Calu3 (cell line): ENCODE measurements at regions of chr6 and their contacts with region 1.

Region 1: DNA sequence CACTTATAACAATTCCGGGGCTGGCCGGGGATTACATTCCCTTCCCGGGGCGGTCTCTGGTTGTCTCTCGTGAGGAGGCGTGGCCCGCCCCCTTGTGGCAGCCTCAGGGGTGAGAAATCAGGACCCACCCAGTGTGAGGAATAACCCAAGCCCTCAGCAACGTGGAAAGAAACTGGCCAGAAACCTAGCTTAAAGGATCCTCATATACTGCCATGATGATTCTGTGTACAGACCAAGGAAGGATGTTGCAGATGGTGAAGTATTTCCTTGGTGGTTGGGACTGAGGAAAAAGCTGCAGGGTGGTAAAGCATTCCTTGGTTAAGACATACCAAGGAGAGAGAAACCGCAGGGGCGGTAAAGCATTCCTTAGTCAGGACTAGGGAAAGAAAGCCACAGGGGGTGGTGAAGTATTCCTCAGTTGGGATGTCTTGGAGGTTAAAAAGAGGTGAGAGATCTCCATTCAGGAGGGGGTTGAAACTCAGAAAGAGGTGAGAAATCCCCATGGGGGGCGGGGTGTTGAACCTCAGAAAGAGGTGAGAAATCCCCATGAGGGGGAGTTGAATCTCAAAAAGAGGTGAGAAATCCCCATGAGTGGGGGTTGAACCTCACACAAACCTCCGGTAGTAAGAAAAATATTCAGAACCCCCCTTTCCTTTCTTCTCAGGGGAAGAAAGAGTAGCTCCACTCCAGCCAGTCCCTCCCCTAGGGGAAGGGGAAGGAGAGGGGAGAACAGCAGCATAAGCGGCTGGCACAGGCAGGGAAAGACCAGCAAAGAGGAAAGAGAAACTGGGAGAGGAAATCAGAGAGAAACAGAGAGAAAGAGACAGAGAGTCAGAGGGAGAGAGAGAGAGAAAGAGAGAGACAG is 238.1 kb downstream of the RNGTT start:
- DNase-seq: no peak
- H3K4me3 Mint-ChIP-seq: no peak overlapping the region
- H3K27ac Mint-ChIP-seq: no peak overlapping the region
- H3K4me1 Mint-ChIP-seq: no peaks in the 10 kb centered on the region
- H3K27me3 Mint-ChIP-seq: no peaks in the 10 kb centered on the region
- CTCF ChIP-seq: no peak

Region 2: GRCh38 chr6:88698661-88699060 is 26.7 kb before region 1 on chr6:
- CTCF ChIA-PET with region 1: no interaction called
- intact Hi-C with region 1: loop called (anchors 2 kb)
- DNase-seq: no peak
- H3K4me3 Mint-ChIP-seq: no peak overlapping the region
- H3K27ac Mint-ChIP-seq: no peak overlapping the region
- H3K4me1 Mint-ChIP-seq: peaks cover 9% of the 10 kb centered on the region
- H3K27me3 Mint-ChIP-seq: no peaks in the 10 kb centered on the region
- CTCF ChIP-seq: no peak